ENCODE measurements at regions of chr3 and their contacts with region 1.

Region 1: DNA sequence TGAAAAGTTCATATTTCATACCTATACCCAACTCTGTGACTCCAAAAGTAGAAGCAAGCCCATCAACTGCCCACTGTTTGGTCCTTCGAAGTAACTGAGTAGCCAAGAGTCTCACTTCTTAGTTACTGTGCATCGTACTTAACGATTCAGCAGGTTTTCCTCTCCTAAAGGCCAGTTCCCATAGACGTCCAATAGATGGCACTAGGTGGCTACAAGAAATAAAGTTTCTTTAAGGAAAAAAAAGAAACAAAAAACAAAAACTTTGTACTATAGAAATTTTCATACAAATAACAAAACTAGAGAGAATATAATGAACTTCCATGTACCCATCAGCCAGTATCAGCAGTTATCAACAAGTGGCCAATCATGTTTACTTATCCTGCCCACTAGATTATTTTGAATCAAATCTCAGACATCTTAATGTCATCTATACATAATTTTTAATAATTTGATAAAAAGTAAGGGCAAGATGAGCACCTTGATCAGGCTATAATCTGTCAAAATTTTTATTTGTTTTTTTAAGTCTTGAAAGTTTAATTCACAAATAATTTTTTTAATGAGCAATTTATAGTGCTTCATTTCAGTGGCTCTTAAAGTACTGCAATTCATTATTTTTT is 63.8 kb upstream of the ACP3 start:
- DNase-seq: no peak
- ATAC-seq: peak; percentile 74
- H3K4me3 ChIP-seq: no peak overlapping the region
- H3K27ac ChIP-seq: no peak overlapping the region
- H3K4me1 ChIP-seq: no peaks in the 10 kb centered on the region
- H3K27me3 ChIP-seq: no peaks in the 10 kb centered on the region; a peak in 1 of 4 replicates
- CTCF ChIP-seq: peak; percentile 58 to 67 (median 58)
- EP300 ChIP-seq: no peak
- POLR2A ChIP-seq: no peak
- RAD21 ChIP-seq: peak; percentile 68

Region 2: GRCh38 chr3:132343018-132343612 is 89.7 kb after region 1 on chr3:
- CTCF ChIA-PET with region 1: interaction called, 38 read pairs
- POLR2A ChIA-PET with region 1: no interaction called
- RAD21 ChIA-PET with region 1: interaction called, 8 read pairs
- SMC1A ChIA-PET with region 1: interaction called, 12 read pairs
- in situ Hi-C with region 1: loop called (anchors 5 kb)
- intact Hi-C with region 1: loop called (anchors 1 kb)
- DNase-seq: no peak
- ATAC-seq: peak; percentile 80
- H3K4me3 ChIP-seq: no peak overlapping the region
- H3K27ac ChIP-seq: no peak overlapping the region
- H3K4me1 ChIP-seq: no peaks in the 10 kb centered on the region
- H3K27me3 ChIP-seq: no peaks in the 10 kb centered on the region
- CTCF ChIP-seq: peak; percentile 69 to 79 (median 75)
- EP300 ChIP-seq: no peak
- POLR2A ChIP-seq: no peak
- RAD21 ChIP-seq: peak; percentile 65

Measured in GM12878 (cell line).